Common myeloid progenitor, CD34-positive (primary cell): ENCODE measurements at regions of chr6 and their contacts with region 1.

Region 1: DNA sequence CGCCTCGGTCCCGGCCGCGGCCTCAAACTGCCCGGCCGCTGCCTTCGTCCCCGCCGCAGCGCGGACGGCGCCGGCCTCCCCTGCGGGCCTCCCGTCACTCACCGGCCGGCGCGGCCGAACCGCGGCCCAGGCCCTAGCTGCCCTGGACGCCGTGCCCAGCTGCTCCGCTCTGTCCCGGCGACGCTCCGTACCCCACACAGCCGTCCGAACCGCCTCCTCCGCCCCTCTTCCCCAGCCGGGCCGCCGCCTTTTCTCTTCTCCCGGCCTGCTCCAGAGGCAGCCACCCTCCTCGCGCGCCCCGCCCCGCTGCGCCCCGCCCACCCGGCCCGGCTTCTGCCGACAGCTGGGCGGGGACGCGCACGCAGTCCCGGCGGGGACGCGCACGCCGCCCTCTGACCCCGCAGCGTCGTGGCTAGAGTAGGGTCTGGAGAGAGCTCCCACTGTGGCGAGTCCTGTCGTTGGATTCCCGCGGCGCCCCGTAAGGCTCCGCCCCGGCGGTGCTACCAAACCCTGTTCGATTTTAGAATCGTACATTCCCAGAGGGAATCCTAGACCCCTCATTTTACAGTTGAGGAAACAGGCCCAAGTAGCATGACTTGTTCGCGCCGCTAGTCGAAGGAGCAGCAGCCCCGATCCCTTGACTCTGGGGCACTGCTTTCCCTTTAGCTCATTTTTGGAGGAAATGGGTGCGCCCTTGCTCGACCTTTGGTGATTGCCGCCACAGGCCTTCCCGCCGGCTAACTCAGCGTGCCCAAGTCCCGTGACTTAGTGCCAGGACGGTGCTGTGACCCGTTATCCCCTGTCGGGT is at the start of gene FBXO30:
- DNase-seq: peak; percentile 90 to 92 (median 91)
- H3K4me3 ChIP-seq: peak within 1 kb of the TSS; percentile 75 to 98 (median 88)
- H3K27ac ChIP-seq: peak within 1 kb of the TSS; percentile 61 to 89
- H3K4me1 ChIP-seq: peaks cover 12 to 28% (median 22%) of the 10 kb centered on the region in 4 experiments
- H3K27me3 ChIP-seq: no peaks in the 10 kb centered on the region

Region 2: GRCh38 chr6:145734486-145735355 is 80.0 kb before region 1 on chr6:
- CTCF ChIA-PET with region 1: interaction called, 11 read pairs
- POLR2A ChIA-PET with region 1: interaction called, 4 read pairs
- DNase-seq: peak; percentile 76 to 90 (median 86)
- H3K4me3 ChIP-seq: peak overlapping the region; percentile 75 to 98 (median 84)
- H3K27ac ChIP-seq: peak overlapping the region; percentile 88 to 96
- H3K4me1 ChIP-seq: peaks cover 9 to 38% (median 21%) of the 10 kb centered on the region in 4 experiments
- H3K27me3 ChIP-seq: no peaks in the 10 kb centered on the region

Region 3: GRCh38 chr6:145789443-145789842 is 25.3 kb before region 1 on chr6:
- CTCF ChIA-PET with region 1: no interaction called
- POLR2A ChIA-PET with region 1: no interaction called
- DNase-seq: no peak
- H3K4me3 ChIP-seq: no peak overlapping the region
- H3K27ac ChIP-seq: no peak overlapping the region
- H3K4me1 ChIP-seq: no peaks in the 10 kb centered on the region
- H3K27me3 ChIP-seq: no peaks in the 10 kb centered on the region